Ascending aorta (tissue), 2 donors: ENCODE measurements at regions of chr22 and their contacts with region 1.

Region 1: DNA sequence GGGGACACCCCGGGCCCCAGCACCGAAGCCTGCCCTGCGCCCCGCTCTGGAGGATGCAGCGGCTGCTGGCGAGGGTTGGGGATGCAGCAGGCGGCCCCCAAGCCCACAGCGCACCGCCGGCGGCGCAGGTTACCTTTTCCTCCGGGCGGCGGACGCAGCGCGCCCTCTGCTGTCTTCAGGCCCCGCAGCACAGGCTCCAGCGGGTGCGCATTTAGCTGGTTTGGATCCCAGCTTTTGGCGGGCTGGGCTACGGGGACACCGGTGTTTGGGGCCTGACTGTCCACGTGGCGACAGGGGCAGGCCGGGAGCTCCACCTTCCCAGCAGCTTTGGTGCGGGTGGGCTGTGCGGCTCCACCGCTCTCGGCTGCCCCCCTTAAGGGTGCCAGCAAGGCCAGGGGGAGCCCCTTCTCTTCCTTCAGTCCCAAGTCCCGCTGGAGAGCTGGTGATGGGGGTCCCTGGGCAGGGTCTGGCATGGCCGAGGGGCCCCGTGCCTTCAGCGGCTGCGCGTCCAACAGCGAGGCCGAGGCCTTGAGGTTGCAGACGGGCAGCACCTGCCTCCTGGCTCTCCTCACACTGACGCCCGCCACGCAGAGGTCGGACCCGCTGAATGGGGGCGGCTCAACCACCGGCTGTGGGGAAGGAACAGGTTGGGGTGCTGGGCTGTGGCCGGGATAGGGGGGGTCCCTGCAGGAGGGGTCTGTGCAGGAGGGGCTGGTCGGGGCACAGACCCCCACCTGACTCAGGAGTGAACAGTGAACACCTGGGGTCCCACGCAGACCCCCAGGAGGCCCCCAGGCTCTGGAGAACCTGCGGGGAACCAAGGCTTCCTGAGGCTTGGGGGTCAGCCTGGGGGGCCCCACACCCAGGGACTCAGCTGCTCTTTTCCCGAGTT is 18.0 kb upstream of the IL17REL start:
- DNase-seq: peak in 1 of 2 donors; percentile 79
- H3K4me3 ChIP-seq: no peak overlapping the region
- H3K27ac ChIP-seq: no peak overlapping the region
- H3K4me1 ChIP-seq: peaks cover 0 to 2% of the 10 kb centered on the region in 2 donors
- H3K27me3 ChIP-seq: no peaks in the 10 kb centered on the region
- CTCF ChIP-seq: peak; percentile 84 to 95 (median 93)

Region 2: DNA sequence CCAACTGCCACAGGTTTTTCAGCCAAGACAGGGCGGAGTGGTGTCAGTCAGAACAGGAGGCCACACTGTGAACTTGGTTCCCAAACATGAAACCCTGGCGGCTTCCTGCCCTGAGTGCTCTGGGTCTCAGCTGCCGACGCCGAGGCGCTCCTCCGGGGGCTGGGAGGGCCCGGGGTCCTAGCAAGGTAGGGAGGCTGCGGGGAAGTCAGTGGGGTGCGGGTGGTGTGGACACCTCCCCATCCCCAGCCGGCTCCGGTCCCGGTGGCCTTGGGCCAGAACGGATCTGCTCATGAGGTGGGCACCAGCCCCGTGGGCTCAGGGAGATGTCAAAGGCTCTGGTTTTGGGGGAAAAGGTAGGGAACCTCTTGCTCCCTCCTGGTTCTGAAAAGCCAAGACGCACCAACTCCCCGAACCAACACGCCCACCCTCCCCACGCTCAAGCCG is 259.7 kb before region 1 on chr22:
- intact Hi-C with region 1: loop called (anchors 10 kb)
- DNase-seq: no peak
- H3K4me3 ChIP-seq: no peak overlapping the region
- H3K27ac ChIP-seq: no peak overlapping the region
- H3K4me1 ChIP-seq: no peaks in the 10 kb centered on the region
- H3K27me3 ChIP-seq: no peaks in the 10 kb centered on the region
- CTCF ChIP-seq: no peak

Region 3: DNA sequence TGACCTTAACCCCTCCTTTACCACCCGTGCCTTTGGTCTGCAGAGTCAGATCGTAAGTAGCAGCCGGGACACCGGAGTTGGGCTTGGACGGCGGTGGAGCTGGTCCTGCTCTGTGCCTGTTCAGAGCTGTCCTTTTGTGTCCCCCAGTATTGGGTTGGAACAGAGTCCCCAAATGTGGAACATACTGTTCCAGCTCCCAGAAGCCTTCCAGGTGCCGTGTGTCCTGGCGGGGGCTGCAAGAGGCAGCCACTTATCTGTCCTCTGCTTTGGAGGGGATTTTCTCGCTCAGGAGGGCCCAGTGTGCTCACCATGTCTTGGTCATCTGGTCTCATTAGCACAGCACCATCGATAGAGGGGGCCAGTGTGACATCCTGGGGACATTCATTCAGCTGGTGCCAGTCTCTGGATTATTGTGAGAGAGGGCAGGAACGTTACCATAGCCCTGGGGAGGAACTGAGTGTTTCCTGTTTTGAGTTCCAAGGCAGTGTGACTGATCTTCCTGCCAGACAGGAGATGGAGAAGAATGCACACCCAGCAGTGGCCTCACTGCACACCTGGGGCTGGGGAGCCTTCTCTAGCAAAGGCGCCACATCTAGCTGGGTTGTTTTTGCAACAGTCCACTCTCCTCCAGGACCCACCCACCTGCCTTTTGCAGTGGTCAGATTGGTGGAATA is 99.7 kb before region 1 on chr22:
- intact Hi-C with region 1: loop called (anchors 1 kb)
- DNase-seq: peak; percentile 51 to 89
- H3K4me3 ChIP-seq: no peak overlapping the region
- H3K27ac ChIP-seq: no peak overlapping the region
- H3K4me1 ChIP-seq: peaks cover 8 to 27% of the 10 kb centered on the region in 2 donors
- H3K27me3 ChIP-seq: no peaks in the 10 kb centered on the region
- CTCF ChIP-seq: peak; percentile 55 to 72 (median 57)

Region 4: GRCh38 chr22:50146439-50147238 is 116.1 kb after region 1 on chr22:
- intact Hi-C with region 1: no loop called
- DNase-seq: peak in 1 of 2 donors; percentile 62
- H3K4me3 ChIP-seq: no peak overlapping the region
- H3K27ac ChIP-seq: no peak overlapping the region
- H3K4me1 ChIP-seq: no peaks in the 10 kb centered on the region
- H3K27me3 ChIP-seq: peaks cover 4% of the 10 kb centered on the region
- CTCF ChIP-seq: peak; percentile 34 to 53 (median 43)